Mammary epithelial cell (primary cell): ENCODE measurements at regions of chr3 and their contacts with region 1.

Region 1: GRCh38 chr3:193831495-193832455 is 238.8 kb downstream of the OPA1 start:
- DNase-seq: peak; percentile 100
- H3K4me3 ChIP-seq: no peak overlapping the region
- H3K27ac ChIP-seq: peak overlapping the region; percentile 100
- H3K4me1 ChIP-seq: peaks cover 51% of the 10 kb centered on the region
- H3K27me3 ChIP-seq: no peaks in the 10 kb centered on the region
- CTCF ChIP-seq: no peak

Region 2: DNA sequence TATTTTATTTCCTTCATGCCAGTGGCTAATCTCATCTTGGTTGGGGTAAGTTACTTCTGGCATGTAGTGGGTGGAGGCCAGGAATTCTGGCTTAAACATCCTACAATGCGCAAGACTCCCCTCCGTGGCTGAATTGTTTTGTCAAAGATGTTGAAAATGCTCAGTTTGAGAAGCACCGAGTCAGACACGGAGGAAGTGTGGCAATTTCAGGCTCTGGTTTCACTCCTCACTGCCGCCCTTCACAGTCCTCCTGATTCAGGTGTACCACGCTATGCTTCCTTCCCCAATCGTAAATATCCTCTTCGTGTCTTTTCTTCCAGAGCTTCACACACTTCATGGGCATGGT is 88.1 kb before region 1 on chr3:
- CTCF ChIA-PET with region 1: no interaction called
- dilution Hi-C with region 1: no loop called
- in situ Hi-C with region 1: no loop called
- intact Hi-C with region 1: no loop called
- DNase-seq: no peak
- H3K4me3 ChIP-seq: no peak overlapping the region
- H3K27ac ChIP-seq: no peak overlapping the region
- H3K4me1 ChIP-seq: no peaks in the 10 kb centered on the region
- H3K27me3 ChIP-seq: no peaks in the 10 kb centered on the region
- CTCF ChIP-seq: no peak

Region 3: GRCh38 chr3:193805509-193805908 is 26.3 kb before region 1 on chr3:
- CTCF ChIA-PET with region 1: no interaction called
- dilution Hi-C with region 1: no loop called
- in situ Hi-C with region 1: no loop called
- intact Hi-C with region 1: loop called (anchors 2 kb)
- DNase-seq: peak; percentile 96
- H3K4me3 ChIP-seq: no peak overlapping the region
- H3K27ac ChIP-seq: no peak overlapping the region
- H3K4me1 ChIP-seq: peaks cover 6% of the 10 kb centered on the region
- H3K27me3 ChIP-seq: no peaks in the 10 kb centered on the region
- CTCF ChIP-seq: no peak

Region 4: DNA sequence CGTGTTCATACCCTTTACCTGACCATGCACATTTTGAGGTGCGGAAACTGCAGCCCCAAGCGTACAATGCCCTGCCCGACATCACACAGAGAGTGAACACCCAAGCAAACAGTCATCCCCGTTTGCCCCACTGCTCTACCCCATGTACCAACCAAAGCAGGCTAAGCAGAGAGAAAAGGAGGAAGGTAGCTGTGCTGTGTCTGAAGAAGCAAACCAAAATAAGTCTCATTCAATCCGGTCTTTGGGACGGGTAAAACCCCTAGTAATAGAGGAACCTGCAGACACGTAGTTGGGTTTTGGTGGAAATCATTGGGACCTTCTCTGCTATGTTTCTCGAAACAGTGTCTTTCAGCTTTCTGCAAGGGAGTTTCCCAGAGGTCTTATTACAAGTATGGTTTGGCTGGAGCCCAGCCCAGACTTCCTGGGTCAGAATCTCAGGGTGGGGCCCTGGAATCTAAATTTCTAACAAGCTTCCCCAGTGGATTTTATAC is 139.5 kb after region 1 on chr3:
- CTCF ChIA-PET with region 1: no interaction called
- dilution Hi-C with region 1: no loop called
- in situ Hi-C with region 1: no loop called
- intact Hi-C with region 1: no loop called
- DNase-seq: peak; percentile 76
- H3K4me3 ChIP-seq: no peak overlapping the region
- H3K27ac ChIP-seq: no peak overlapping the region
- H3K4me1 ChIP-seq: peaks cover 26% of the 10 kb centered on the region
- H3K27me3 ChIP-seq: no peaks in the 10 kb centered on the region
- CTCF ChIP-seq: no peak

Region 5: GRCh38 chr3:194003125-194004057 is 171.6 kb after region 1 on chr3:
- CTCF ChIA-PET with region 1: no interaction called
- dilution Hi-C with region 1: no loop called
- in situ Hi-C with region 1: no loop called
- intact Hi-C with region 1: loop called (anchors 2 kb)
- DNase-seq: peak; percentile 94
- H3K4me3 ChIP-seq: peak overlapping the region; percentile 29 to 41 (median 32)
- H3K27ac ChIP-seq: peak overlapping the region; percentile 75
- H3K4me1 ChIP-seq: peaks cover 25% of the 10 kb centered on the region
- H3K27me3 ChIP-seq: no peaks in the 10 kb centered on the region
- CTCF ChIP-seq: no peak

Region 6: DNA sequence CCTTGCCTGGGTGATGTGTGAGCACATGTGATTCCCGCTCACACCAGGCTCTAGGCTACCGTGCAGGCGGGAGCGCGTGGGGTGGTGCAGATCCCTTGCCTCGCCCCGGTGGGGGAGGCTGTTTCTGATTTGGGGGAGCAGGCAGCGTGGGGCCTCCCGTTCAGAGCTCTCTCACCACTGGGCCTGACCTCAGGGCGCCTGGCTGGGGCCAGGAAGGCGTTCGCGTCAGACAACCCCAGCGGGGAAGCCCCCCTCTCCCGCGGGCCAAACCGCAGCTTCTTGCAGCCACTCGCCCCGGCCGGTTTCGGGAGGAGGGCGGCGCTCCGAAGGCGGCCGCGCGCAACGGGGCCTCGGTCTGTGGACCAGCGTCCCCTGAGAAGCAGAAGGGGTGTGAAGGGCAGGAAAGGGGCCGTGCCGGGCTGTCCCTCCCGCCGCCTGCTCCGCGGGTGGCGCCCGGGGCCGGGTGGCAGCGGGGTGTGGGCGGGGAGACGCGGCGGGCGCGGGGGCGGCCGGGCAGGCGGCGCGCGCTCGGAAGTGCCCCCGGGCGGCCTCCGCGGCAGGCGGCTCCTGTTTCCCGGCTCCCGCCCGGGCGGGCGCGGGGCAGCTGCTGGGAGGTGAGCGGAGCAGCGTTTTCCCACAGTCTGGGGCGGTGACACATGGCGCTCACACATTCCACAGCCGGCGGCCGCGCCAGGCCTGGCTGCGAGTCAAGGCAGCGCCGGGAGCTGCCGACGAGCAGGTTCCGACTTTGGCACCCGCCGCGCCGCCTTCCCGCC is 239.0 kb after region 1 on chr3:
- CTCF ChIA-PET with region 1: no interaction called
- dilution Hi-C with region 1: no loop called
- in situ Hi-C with region 1: no loop called
- intact Hi-C with region 1: loop called (anchors 1 kb)
- DNase-seq: peak; percentile 95
- H3K4me3 ChIP-seq: peak overlapping the region; percentile 18 to 40 (median 24)
- H3K27ac ChIP-seq: peak overlapping the region; percentile 61
- H3K4me1 ChIP-seq: peaks cover 20% of the 10 kb centered on the region
- H3K27me3 ChIP-seq: no peaks in the 10 kb centered on the region
- CTCF ChIP-seq: no peak

Region 7: DNA sequence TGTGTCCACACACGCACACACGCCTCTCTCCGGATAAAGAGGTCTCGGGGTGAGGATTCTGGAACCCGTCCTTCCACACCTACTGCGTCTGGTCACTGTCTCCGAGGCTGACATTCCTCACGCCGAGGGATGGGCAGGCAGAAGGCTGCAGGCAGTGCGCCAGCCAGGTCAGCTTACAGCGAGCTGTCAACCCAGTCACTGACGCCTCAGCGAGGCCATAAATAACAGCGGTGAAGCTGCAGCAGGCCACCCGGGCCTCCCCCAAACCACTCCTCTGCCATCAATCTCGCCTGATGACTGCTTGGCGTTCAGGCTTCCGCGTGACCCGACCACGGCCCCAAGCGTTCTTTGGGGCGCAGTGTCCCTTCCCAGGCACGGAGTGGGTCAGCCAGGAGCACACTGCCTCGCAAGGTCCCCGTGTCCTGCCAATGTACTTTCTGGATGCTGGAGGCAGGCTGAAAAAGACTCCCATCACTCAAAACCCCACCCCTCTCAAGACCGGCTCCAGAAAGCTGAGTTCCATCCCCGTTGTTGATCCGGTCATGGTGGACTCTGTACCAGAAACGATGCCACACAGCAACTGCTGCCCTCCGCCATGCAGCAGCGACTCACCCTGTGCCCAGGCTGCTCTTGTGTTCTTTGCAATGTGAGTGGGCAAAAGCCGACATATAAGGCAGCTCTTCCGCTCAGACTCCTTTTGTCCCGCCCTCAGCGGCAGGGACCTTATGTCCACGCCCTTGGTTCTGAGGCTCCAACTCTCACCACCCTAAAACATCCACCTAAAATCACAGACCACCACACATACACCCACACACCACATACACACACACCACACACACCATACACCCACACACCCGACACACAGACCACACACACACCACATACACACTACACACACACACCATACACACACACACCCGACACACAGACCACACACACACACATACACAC is 492.3 kb after region 1 on chr3:
- CTCF ChIA-PET with region 1: no interaction called
- dilution Hi-C with region 1: no loop called
- in situ Hi-C with region 1: no loop called
- intact Hi-C with region 1: loop called (anchors 2 kb)
- DNase-seq: no peak
- H3K4me3 ChIP-seq: no peak overlapping the region
- H3K27ac ChIP-seq: peak overlapping the region; percentile 28
- H3K4me1 ChIP-seq: peaks cover 16% of the 10 kb centered on the region
- H3K27me3 ChIP-seq: no peaks in the 10 kb centered on the region
- CTCF ChIP-seq: no peak